Gastrocnemius medialis (tissue), 4 donors: ENCODE measurements at regions of chr1 and their contacts with region 1.

Region 1: DNA sequence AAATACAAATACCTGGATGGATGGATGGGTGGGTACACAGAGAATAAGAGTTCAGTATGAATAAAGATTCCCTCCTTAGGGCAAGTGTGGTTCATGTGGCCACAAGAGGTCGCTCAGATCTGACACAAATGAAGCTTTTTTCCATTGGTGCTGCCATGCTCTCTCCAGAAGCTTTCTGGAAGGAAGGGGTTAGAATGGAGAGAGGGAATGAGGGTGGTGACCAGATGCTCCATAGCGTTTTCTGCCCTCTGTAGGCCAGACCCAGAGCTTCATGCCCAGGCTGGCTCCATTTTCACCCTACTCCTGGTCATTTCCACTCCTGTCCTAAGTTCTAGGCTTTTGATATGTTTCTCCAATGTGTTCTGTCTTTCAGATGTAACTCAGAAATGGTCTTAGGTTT is 3.3 kb upstream of the FCRL6 start:
- DNase-seq: peak; percentile 40 to 41
- ATAC-seq: peak; percentile 92 to 94
- H3K4me3 ChIP-seq: no peak overlapping the region
- H3K27ac ChIP-seq: no peak overlapping the region
- H3K4me1 ChIP-seq: no peaks in the 10 kb centered on the region
- H3K27me3 ChIP-seq: peaks cover 0 to 9% (median 3%) of the 10 kb centered on the region in 3 donors
- CTCF ChIP-seq: peak; percentile 35 to 82 (median 67)
- POLR2A ChIP-seq: no peak

Region 2: DNA sequence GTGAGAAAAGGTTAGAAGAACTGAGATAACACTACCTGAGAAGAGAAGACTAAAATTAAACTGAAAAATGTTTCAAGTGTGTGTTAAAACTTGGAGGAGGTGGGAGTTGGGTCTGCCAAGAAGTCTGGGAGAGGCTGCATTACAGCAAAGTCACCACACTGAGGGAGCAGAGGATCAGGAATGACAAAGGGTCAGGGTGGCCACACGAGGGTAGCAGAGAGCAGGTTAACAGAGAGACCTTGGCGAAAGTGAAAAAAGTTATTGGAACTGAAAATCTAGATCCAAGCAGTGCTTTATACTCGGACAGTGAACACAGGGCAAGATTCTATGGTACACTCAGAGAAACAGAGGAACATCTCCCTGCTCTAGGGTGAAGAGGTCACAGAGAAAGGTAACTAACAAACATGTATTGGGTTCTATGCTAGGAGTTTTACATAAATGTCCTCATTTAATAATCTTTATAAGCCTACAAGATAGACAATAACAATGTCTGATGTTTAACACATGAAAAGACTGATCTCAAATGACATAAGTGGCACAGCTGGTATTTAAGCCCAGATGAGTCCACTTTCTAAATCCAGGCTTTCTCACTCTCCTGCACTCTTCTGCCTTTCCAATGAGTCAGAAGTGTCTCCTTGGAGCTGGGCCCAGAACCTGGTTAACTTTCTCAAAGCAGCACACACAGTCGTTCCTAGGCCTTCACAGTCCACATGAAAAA is 637.7 kb before region 1 on chr1:
- in situ Hi-C with region 1: loop called in 1 of 4 experiments (anchors 25 kb)
- intact Hi-C with region 1: loop called (anchors 10 kb)
- DNase-seq: peak; percentile 66 to 82
- ATAC-seq: peak; percentile 98 to 100
- H3K4me3 ChIP-seq: no peak overlapping the region
- H3K27ac ChIP-seq: peak overlapping the region; percentile 71 to 86 (median 78)
- H3K4me1 ChIP-seq: peaks cover 5 to 7% of the 10 kb centered on the region in 2 donors
- H3K27me3 ChIP-seq: peaks cover 0 to 1% (median 0%) of the 10 kb centered on the region in 3 donors
- CTCF ChIP-seq: peak; percentile 81 to 99 (median 88)
- POLR2A ChIP-seq: no peak

Region 3: DNA sequence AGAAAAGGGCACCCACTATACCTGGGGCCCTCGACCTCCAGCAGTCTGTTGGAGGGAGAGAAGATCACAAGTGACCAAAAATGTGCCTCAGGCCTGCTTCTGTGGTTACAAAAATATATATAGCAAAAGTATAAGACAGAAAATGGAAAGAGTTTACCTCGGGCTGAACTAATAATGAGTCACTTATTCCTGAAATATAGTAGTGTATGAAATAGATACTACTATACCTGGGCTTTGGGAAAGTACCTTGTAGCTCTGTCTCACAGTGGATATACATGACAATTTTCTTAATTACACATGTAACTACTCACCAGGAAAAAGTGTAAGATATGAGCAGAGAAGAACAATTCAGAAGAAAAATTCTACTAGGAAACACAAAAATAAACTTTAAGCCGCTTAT is 218.6 kb before region 1 on chr1:
- in situ Hi-C with region 1: no loop called
- intact Hi-C with region 1: no loop called
- DNase-seq: no peak
- ATAC-seq: no peak
- H3K4me3 ChIP-seq: no peak overlapping the region
- H3K27ac ChIP-seq: no peak overlapping the region
- H3K4me1 ChIP-seq: no peaks in the 10 kb centered on the region
- H3K27me3 ChIP-seq: no peaks in the 10 kb centered on the region
- CTCF ChIP-seq: no peak
- POLR2A ChIP-seq: no peak

Region 4: DNA sequence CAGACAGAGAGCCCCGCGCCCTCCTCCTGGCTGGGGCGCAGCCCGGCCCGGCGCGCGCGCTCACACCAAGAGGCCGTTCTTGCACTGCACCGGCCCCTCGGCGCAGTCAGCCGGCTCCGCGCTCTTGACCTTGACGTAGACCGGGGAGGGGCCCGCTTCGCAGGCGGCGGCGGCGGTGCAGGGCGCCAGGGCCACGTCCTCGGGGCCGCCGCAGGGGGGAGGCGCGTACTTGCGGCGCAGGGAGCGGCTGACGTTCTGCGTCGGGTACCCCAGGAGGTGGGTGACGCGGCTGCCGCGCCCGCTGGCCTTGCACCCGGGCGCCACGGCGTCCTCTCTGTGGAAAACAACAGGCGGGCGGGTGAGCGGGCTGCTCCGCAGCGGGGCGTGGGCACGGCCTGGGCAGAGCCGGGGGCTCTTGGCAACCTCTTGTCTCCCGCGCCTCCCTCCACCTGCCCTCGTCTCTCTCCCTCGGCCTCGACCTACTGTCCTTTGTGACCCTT is 55.9 kb after region 1 on chr1:
- in situ Hi-C with region 1: loop called in 1 of 4 experiments (anchors 10 kb)
- intact Hi-C with region 1: no loop called
- DNase-seq: peak; percentile 64 to 75
- ATAC-seq: peak; percentile 85 to 86
- H3K4me3 ChIP-seq: peak overlapping the region; percentile 69 to 99 (median 82)
- H3K27ac ChIP-seq: peak overlapping the region; percentile 82 to 95 (median 89)
- H3K4me1 ChIP-seq: peaks cover 8 to 14% of the 10 kb centered on the region in 2 donors
- H3K27me3 ChIP-seq: no peaks in the 10 kb centered on the region
- CTCF ChIP-seq: peak in 3 of 5 experiments; percentile 9 to 30 (median 17)
- POLR2A ChIP-seq: peak; percentile 55 to 71

Region 5: DNA sequence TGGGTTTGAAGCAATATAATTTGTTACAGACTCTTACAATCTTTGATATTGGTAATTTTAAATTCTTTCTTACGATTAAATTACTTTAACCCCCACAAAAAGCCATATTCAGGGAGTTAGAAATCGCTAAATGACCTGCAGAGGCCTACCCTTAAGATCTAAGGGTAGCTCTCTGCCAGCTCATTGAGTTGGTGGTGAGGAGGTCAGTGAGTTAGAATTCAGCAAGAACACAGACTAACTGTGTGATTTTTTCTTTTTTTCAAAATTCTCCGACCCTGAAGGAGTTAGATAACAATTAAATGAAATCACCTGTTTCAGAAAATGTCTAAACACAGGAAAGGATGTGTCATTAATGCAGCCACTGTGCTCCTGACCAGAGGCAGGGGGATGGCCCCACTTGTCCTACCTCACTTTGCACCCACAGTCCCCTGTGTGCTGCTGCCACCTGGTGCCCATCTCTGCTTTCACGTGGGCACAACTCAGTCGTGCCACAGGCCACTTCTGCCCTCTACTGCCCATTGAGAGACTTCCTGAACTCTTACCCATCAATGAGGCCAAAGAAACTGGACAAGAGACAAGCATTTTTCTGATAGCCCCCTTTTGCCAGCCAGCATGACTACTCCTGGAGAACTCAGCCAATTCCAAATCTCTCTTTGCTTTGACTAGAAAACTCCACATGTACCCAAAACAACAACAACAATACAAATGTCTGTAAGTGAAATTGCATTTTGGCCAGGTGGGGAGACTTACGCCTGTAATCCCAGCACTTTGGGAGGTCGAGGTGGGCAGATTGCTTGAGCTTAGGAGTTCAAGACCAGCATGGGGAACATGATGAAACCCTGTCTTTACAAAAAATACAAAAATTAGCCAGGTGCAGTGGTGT is 92.6 kb after region 1 on chr1:
- in situ Hi-C with region 1: loop called (anchors 5 to 10 kb)
- intact Hi-C with region 1: loop called (anchors 1 kb)
- DNase-seq: peak; percentile 54 to 71
- ATAC-seq: peak; percentile 87 to 94
- H3K4me3 ChIP-seq: no peak overlapping the region
- H3K27ac ChIP-seq: no peak overlapping the region
- H3K4me1 ChIP-seq: peaks cover 3 to 13% of the 10 kb centered on the region in 2 donors
- H3K27me3 ChIP-seq: no peaks in the 10 kb centered on the region
- CTCF ChIP-seq: peak; percentile 86 to 95 (median 90)
- POLR2A ChIP-seq: no peak

Region 6: DNA sequence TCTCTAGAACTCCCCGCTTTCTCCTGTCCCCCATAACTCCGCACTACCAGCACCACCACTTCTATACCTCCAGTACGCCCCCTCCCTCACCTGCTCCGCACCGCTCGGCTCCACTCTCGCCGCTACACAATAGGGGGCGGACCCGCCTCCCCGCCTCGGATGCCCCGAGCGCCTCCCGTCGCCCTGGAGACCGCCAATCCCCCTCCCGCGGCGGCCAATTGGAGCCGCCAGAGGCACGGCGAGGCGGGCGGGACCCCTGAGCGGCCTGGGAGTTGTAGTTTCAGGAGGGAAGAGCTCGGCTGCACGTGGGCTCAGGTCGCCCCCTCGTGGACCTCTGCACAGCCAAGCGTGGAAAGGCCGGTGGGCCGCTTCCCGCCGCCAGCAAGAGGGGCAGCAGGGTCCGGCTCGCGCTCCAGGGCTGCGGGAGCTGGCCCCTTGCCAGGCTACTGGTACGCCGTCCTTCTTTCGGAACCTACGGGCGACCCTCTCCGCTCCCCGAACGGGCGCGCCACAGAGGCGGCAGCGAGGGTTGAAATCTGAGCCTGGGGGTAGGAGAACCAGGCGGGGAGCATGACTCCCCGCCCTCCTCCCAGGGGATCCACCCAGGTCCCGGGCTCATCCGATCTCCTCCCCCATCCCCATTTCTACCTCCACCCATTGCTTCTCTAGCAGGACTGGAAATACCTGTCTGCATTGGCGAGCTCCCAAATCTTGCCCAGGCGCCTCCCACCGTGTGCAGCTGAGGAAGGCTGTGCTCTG is 146.8 kb after region 1 on chr1 and contains the start of gene IGSF9:
- in situ Hi-C with region 1: no loop called
- intact Hi-C with region 1: loop called (anchors 5 kb)
- DNase-seq: no peak
- ATAC-seq: peak; percentile 63 to 66
- H3K4me3 ChIP-seq: peak within 1 kb of the TSS; percentile 45 to 62 (median 50)
- H3K27ac ChIP-seq: no peak within 1 kb of the TSS
- H3K4me1 ChIP-seq: peaks cover 0 to 15% of the 10 kb centered on the region in 2 donors
- H3K27me3 ChIP-seq: peaks cover 24 to 27% (median 24%) of the 10 kb centered on the region in 3 donors
- CTCF ChIP-seq: peak; percentile 7 to 64 (median 48)
- POLR2A ChIP-seq: no peak
- total RNA-seq, gene IGSF9: 0.10 to 0.11 TPM in 2 of 4 donors, not detected in the others

Region 7: DNA sequence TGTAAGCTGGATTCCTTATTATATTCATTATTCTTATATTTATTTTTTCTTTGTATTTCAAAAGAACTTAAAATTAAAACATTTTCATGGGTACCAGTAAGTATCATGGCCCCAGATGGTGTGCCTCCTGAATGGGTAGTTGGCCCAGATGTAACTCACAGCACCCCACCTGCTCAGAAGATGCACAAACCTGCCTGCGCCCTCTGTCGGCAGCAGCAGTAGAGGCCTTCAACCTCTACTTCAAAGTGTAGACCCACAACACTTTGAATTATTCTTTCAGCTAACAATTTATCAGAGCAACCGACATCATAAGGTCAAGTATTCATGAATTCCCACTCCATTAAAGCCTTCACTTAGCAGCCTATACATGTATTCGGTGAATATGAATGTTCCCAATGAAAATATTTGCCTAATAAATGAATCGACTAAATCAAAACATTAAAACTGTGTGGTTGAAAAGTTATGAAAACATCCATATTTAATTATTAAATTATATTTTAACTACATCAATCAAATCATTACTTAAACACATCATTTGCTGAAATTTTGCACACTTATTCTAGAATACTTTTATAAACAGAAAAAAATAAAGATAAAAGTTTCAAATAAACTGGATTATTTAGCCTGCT is 207.5 kb after region 1 on chr1:
- in situ Hi-C with region 1: loop called in 1 of 4 experiments (anchors 25 kb)
- intact Hi-C with region 1: loop called (anchors 5 kb)
- DNase-seq: peak in 1 of 2 donors; percentile 23
- ATAC-seq: no peak
- H3K4me3 ChIP-seq: no peak overlapping the region
- H3K27ac ChIP-seq: no peak overlapping the region
- H3K4me1 ChIP-seq: no peaks in the 10 kb centered on the region
- H3K27me3 ChIP-seq: no peaks in the 10 kb centered on the region
- CTCF ChIP-seq: peak; percentile 11 to 66 (median 30)
- POLR2A ChIP-seq: no peak